Ovary (tissue), 10 donors: ENCODE measurements at regions of chr19 and their contacts with region 1.

Region 1: GRCh38 chr19:679418-680286 is 3.5 kb downstream of the FSTL3 start:
- DNase-seq: peak; percentile 78 to 92 (median 88)
- H3K4me3 ChIP-seq: peak overlapping the region; percentile 59
- H3K27ac ChIP-seq: peak overlapping the region; percentile 91 to 95
- H3K4me1 ChIP-seq: peaks cover 17% of the 10 kb centered on the region
- H3K27me3 ChIP-seq: no peaks in the 10 kb centered on the region
- CTCF ChIP-seq: no peak
- EP300 ChIP-seq: peak; percentile 91
- POLR2A ChIP-seq: no peak

Region 2: GRCh38 chr19:719636-720344 is 40.1 kb after region 1 on chr19:
- intact Hi-C with region 1: loop called in 1 of 4 experiments (anchors 5 kb)
- DNase-seq: peak; percentile 71 to 87 (median 79)
- H3K4me3 ChIP-seq: peak overlapping the region; percentile 2
- H3K27ac ChIP-seq: peak overlapping the region; percentile 92 to 96
- H3K4me1 ChIP-seq: peaks cover 18% of the 10 kb centered on the region
- H3K27me3 ChIP-seq: no peaks in the 10 kb centered on the region
- CTCF ChIP-seq: no peak
- EP300 ChIP-seq: no peak
- POLR2A ChIP-seq: peak; percentile 3

Region 3: GRCh38 chr19:933216-933882 is 253.7 kb after region 1 on chr19:
- intact Hi-C with region 1: loop called in 1 of 4 experiments (anchors 10 kb)
- DNase-seq: peak; percentile 83 to 93 (median 87)
- H3K4me3 ChIP-seq: no peak overlapping the region
- H3K27ac ChIP-seq: peak overlapping the region in 1 of 2 donors; percentile 10
- H3K4me1 ChIP-seq: peaks cover 25% of the 10 kb centered on the region
- H3K27me3 ChIP-seq: no peaks in the 10 kb centered on the region
- CTCF ChIP-seq: peak in 1 of 3 donors; percentile 23
- EP300 ChIP-seq: no peak
- POLR2A ChIP-seq: no peak